Kidney (tissue), 22 donors: ENCODE measurements at regions of chr10 and their contacts with region 1.

Region 1: DNA sequence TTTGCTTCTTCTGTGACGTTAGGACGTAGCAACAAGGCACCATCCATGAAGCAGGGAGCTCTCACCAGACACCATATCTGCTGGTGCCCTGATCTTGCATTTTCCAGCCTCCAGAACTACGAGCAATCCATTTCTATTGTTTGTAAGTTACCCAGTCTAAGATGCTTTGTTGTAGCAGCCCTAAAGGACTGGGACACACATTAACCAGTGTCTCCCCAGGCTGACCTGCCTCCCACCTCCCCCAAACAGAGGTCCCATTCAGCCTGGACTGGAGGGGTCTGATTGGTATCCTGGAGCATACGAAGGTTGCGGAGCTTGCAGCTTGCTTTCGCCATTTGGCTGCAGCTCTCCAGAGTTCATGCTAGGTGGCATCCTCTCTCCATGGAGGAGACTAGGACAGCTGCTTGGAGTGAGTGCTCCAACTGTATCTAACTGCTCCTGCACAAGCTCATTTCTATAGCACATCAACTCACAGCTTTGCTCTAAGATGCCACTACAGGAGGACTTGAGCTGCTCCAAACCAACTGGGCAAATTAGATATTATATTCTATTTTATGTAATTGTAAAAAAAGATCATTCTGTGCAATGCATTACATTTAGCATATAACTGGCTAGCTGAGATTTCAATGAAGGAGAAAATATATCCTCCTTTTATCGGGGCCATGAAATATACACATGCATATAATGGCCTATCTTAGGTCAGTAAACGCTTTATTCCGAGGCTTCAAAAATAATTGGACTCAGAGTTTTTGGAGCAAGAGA is 8.0 kb upstream of the GRK5 start:
- DNase-seq: peak in 4 of 5 donors; percentile 77 to 90 (median 84)
- H3K4me3 ChIP-seq: no peak overlapping the region
- H3K27ac ChIP-seq: no peak overlapping the region
- H3K4me1 ChIP-seq: peaks cover 0 to 3% (median 0%) of the 10 kb centered on the region in 3 donors
- H3K27me3 ChIP-seq: no peaks in the 10 kb centered on the region
- CTCF ChIP-seq: peak; percentile 81

Region 2: DNA sequence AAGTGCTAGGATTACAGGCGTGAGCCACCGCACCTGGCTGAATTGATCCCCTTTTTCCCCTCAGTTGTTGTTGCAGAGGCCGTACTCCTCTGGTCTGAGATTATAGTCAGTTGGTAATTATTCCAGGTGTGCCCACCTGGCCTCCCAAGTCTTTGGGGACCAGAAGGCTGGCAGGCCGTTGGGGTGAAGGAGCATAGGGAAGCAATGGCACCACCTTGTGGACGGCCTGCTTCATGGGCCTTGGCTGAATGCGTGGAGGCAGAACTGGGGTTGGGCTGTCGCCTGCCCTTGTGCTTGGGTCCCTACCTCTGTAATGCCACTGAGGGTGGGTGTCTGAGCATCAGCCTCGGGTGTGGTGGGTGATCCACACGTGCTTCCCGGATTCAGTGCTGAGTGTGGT is 217.4 kb after region 1 on chr10:
- intact Hi-C with region 1: loop called (anchors 10 kb)
- DNase-seq: peak in 4 of 5 donors; percentile 69 to 84 (median 78)
- H3K4me3 ChIP-seq: no peak overlapping the region
- H3K27ac ChIP-seq: no peak overlapping the region
- H3K4me1 ChIP-seq: peaks cover 3 to 12% (median 7%) of the 10 kb centered on the region in 3 donors
- H3K27me3 ChIP-seq: no peaks in the 10 kb centered on the region
- CTCF ChIP-seq: peak; percentile 77